Heart right ventricle (tissue), 16 donors: ENCODE measurements at regions of chr13 and their contacts with region 1.

Region 1: GRCh38 chr13:31199849-31200636 is at the start of gene B3GLCT:
- DNase-seq: peak; percentile 65 to 85
- ATAC-seq: peak; percentile 86 to 90 (median 88)
- H3K4me3 ChIP-seq: peak within 1 kb of the TSS; percentile 55 to 86 (median 80)
- H3K27ac ChIP-seq: peak within 1 kb of the TSS; percentile 95 to 100 (median 98)
- H3K4me1 ChIP-seq: peaks cover 0 to 47% (median 34%) of the 10 kb centered on the region in 9 donors
- H3K27me3 ChIP-seq: no peaks in the 10 kb centered on the region
- CTCF ChIP-seq: peak; percentile 73 to 92 (median 87)
- total RNA-seq, gene B3GLCT: 12.0 to 28.1 (median 20.1) TPM

Region 2: GRCh38 chr13:31050486-31051400 is 149.3 kb before region 1 on chr13:
- intact Hi-C with region 1: no loop called
- DNase-seq: no peak
- ATAC-seq: no peak
- H3K4me3 ChIP-seq: no peak overlapping the region
- H3K27ac ChIP-seq: no peak overlapping the region
- H3K4me1 ChIP-seq: peaks cover 0 to 20% (median 13%) of the 10 kb centered on the region in 9 donors
- H3K27me3 ChIP-seq: no peaks in the 10 kb centered on the region
- CTCF ChIP-seq: peak in 3 of 9 donors; percentile 4 to 30 (median 22)

Region 3: DNA sequence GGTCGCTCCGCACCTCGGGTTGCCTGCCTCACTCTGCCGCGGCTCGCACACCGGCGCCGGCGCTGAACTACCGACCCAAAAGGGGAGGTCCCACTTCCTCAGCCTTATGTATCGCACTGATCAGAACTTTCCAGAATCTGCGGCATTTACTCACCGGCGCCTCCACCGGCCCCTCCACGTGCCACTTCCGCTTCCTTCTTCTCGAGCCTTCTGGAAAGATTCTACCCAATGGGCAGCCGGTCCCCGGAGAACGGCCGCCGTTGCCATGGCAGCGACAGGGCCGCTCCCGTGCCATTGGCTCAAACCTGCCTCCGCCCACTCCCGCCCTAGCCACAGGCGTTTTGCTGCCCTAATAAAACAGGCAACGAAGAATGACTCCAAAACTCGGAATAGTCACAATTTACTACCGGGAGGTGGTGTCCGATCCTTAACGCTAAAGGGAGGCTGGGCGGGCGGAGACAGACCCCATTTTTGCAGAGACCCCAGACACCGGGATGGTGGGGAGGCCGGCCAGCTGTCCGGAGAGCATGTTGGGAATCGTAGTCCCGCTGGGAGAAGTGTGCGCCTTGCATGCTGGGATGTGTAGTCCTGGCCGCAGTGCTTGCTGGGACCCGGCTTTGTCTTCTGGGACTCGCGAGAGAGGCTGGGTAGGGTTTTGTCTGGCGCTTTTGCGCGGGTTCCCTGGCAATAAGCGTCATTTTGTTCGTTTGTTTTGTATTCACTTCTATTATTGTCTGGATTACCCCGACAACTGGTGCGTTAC is 38.0 kb before region 1 on chr13 and contains the start of gene HSPH1:
- intact Hi-C with region 1: loop called in 3 of 10 experiments (anchors 1 to 5 kb)
- DNase-seq: peak; percentile 99
- ATAC-seq: peak; percentile 96 to 99 (median 98)
- H3K4me3 ChIP-seq: peak within 1 kb of the TSS; percentile 72 to 99 (median 88)
- H3K27ac ChIP-seq: peak within 1 kb of the TSS; percentile 68 to 99 (median 88)
- H3K4me1 ChIP-seq: peaks cover 0 to 30% (median 21%) of the 10 kb centered on the region in 9 donors
- H3K27me3 ChIP-seq: no peaks in the 10 kb centered on the region
- CTCF ChIP-seq: peak in 6 of 9 donors; percentile 6 to 36 (median 28)
- total RNA-seq, gene HSPH1: 31.1 to 65.4 (median 50.5) TPM